Motor neuron (in vitro differentiated cells): ENCODE measurements at regions of chr6 and their contacts with region 1.

Region 1: DNA sequence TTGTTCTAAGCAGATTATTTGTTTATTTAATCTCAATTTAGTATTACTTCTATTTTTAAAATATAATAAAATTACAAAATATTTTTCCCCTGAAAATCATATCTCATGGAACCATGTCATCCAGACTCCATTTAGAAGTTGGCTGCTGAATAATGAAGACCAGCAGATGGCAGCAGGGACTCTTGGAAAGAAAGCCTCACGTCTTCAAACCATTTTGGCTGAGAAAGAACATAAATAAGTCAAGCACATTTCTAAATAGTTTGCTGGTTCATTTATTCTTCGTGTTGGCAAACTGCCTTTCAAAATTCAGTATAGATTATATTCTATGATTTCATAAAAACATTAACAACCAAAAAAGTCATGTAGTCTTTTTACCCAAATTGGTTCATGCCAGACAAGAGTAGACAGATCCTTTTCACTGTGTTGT is 71.7 kb downstream of the RCAN2 start:
- ATAC-seq: peak in 4 of 8 experiments; percentile 41 to 51 (median 44)
- H3K4me3 ChIP-seq: no peak overlapping the region
- H3K27ac ChIP-seq: no peak overlapping the region
- H3K4me1 ChIP-seq: no peaks in the 10 kb centered on the region

Region 2: DNA sequence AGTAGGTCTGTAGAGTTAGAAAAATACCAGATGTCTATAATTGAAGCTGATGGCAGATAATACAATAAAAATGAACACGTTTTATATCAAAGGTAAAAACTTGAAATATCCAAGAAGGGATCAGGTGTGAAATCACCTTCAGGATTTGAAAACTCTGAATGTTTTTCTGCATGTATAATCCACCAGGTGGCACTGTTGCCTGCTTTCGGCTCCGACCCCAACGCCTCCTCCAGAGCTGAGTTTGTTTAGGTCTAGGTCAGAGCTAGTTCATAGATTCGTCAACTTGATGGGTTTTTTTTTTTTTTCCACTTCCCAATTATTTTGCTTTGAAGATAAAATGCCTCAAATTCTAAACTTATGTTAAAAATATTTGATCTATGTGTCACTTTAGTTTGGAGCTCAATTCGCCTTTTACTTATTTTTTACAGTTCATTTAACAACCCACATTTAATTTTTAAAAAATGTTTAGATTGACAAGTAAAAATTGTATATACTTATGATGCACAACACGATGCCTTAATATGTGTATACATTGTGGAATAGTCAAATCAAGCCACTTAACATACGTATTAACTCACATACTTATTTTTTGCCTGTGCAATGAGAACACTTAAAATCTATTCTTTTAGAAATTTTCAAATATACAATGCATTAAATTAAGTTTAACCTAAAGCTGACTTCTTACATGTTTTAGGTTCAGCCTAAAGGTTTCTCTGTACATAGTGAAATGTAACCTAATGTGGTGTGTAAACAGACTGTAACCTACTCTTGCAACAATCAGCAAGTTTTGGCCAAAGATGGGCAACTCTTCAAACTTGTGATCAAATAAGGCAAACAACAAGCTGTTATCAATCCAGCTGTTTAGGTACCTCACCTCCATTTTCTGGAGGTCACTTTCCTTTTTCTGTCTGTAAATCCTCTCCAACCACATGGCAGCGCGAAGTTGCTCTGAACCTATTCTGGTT is 329.2 kb before region 1 on chr6:
- in situ Hi-C with region 1: loop called in 1 of 9 experiments (anchors 25 kb)
- ATAC-seq: peak in 4 of 8 experiments; percentile 22 to 62 (median 39)
- H3K4me3 ChIP-seq: no peak overlapping the region
- H3K27ac ChIP-seq: no peak overlapping the region
- H3K4me1 ChIP-seq: no peaks in the 10 kb centered on the region

Region 3: DNA sequence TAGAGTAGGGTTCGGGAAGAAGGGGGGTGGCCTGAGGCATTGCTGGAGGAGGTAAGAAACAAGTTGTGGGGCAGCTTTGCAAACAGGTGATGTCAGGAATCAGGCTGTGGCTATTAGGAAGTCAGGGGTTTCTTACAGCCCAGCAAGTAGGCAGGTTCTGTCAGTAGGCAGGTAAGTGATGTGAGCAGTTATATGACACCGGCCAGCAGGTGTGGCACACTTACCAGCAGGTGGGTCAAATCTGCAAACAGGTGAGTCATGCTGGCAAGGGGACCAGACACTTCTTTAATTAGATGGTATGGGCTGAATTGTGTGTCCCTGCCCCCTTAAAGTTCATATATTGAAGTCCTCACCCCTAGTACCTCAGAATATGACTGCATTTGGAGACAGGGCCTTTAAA is 306.2 kb before region 1 on chr6:
- in situ Hi-C with region 1: no loop called
- ATAC-seq: no peak
- H3K4me3 ChIP-seq: no peak overlapping the region
- H3K27ac ChIP-seq: no peak overlapping the region
- H3K4me1 ChIP-seq: no peaks in the 10 kb centered on the region

Region 4: DNA sequence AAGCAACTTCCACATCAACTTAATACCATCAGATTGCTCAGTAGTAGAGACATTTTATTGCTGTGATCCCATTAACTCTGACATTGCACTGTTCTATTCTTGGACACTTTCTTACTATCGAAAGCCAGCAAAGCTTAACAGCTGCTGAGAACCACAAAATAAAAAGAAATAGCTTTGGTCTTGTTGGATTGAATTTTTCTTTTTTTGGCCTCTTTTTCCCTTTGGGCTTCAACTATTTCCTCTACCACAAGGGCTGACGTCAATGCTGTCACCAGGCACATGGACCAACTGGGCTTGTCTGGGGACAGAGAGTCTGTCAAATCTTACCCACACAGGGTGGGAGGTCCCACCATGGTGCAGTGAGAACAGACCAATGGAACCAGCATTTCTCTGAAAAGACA is 185.4 kb before region 1 on chr6:
- in situ Hi-C with region 1: loop called in 1 of 9 experiments (anchors 25 kb)
- ATAC-seq: no peak
- H3K4me3 ChIP-seq: no peak overlapping the region
- H3K27ac ChIP-seq: no peak overlapping the region
- H3K4me1 ChIP-seq: no peaks in the 10 kb centered on the region

Region 5: GRCh38 chr6:46347669-46348068 is 71.9 kb before region 1 on chr6:
- in situ Hi-C with region 1: no loop called
- ATAC-seq: peak in 5 of 8 experiments; percentile 27 to 60 (median 41)
- H3K4me3 ChIP-seq: no peak overlapping the region
- H3K27ac ChIP-seq: no peak overlapping the region
- H3K4me1 ChIP-seq: peaks cover 0 to 4% of the 10 kb centered on the region in 2 donors

Region 6: GRCh38 chr6:46606338-46606737 is 186.7 kb after region 1 on chr6:
- in situ Hi-C with region 1: loop called in 2 of 9 experiments (anchors 10 to 25 kb)
- ATAC-seq: peak in 1 of 8 experiments; percentile 22
- H3K4me3 ChIP-seq: no peak overlapping the region
- H3K27ac ChIP-seq: no peak overlapping the region
- H3K4me1 ChIP-seq: no peaks in the 10 kb centered on the region

Region 7: DNA sequence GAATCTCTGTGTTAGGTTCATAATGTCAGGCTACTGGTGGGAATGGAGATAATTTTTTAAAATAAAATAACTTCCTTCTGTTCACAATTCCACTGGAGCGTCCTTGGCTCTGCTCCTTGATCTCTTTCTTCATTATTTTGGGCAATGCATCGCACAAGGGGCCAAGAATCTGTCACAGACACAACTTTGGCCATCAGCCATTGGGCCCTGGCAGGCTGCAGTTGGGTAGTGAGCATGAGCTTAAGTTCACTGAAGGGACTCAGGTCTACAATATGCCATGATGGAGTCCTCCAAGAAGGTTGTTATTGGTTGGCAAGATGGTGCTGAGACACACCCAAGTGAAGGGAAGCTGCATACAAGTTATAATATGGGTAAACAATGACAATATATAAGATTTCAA is 193.1 kb after region 1 on chr6:
- in situ Hi-C with region 1: loop called in 2 of 9 experiments (anchors 10 to 25 kb)
- ATAC-seq: no peak
- H3K4me3 ChIP-seq: no peak overlapping the region
- H3K27ac ChIP-seq: no peak overlapping the region
- H3K4me1 ChIP-seq: no peaks in the 10 kb centered on the region

Region 8: GRCh38 chr6:46730921-46731461 is 311.4 kb after region 1 on chr6:
- in situ Hi-C with region 1: no loop called
- ATAC-seq: no peak
- H3K4me3 ChIP-seq: no peak overlapping the region
- H3K27ac ChIP-seq: no peak overlapping the region
- H3K4me1 ChIP-seq: no peaks in the 10 kb centered on the region